BJ (cell line): ENCODE measurements at regions of chr2 and their contacts with region 1.

Region 1: GRCh38 chr2:18117592-18117991 is 239.1 kb downstream of the KCNS3 start:
- DNase-seq: no peak
- H3K4me3 ChIP-seq: no peak overlapping the region
- H3K27me3 ChIP-seq: no peaks in the 10 kb centered on the region; the same call in 1 of the 2 replicates
- CTCF ChIP-seq: peak; percentile 73

Region 2: GRCh38 chr2:17857021-17857420 is 260.6 kb before region 1 on chr2:
- CTCF ChIA-PET with region 1: interaction called, 53 read pairs
- POLR2A ChIA-PET with region 1: no interaction called
- DNase-seq: no peak
- H3K4me3 ChIP-seq: no peak overlapping the region
- H3K27me3 ChIP-seq: no peaks in the 10 kb centered on the region; the same call in 1 of the 2 replicates
- CTCF ChIP-seq: no peak

Region 3: GRCh38 chr2:18645315-18645714 is 527.7 kb after region 1 on chr2:
- CTCF ChIA-PET with region 1: no interaction called
- POLR2A ChIA-PET with region 1: no interaction called
- DNase-seq: no peak
- H3K4me3 ChIP-seq: no peak overlapping the region
- H3K27me3 ChIP-seq: no peaks in the 10 kb centered on the region
- CTCF ChIP-seq: no peak